OCI-LY7 (cell line): ENCODE measurements at regions of chr17 and their contacts with region 1.

Region 1: DNA sequence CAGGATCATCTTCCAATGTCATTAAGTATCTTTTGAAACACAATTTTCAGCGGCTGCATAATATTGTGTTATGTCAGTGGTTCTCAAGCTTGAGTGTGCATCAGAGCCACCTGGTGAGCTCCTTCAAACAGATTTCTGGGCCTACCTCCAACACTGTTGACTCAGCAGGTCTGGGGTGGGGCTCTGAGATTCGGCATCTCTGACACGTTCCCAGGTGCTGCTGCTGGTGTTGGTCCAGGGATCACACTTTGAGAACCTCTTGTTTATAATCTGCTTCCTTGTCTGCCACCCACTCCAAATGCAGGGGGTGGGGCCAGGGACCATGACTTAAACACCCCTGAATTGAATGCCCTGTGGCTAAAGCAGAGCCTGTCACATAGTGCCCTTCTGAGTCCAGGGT is 73.8 kb upstream of the HNF1B start:
- DNase-seq: no peak
- H3K4me3 ChIP-seq: no peak overlapping the region
- H3K27ac ChIP-seq: no peak overlapping the region
- H3K4me1 ChIP-seq: peaks cover 49% of the 10 kb centered on the region
- CTCF ChIP-seq: no peak

Region 2: GRCh38 chr17:37527249-37527851 is 291.3 kb before region 1 on chr17:
- CTCF ChIA-PET with region 1: no interaction called
- POLR2A ChIA-PET with region 1: no interaction called
- intact Hi-C with region 1: loop called (anchors 10 kb)
- DNase-seq: peak; percentile 72
- H3K4me3 ChIP-seq: no peak overlapping the region
- H3K27ac ChIP-seq: no peak overlapping the region
- H3K4me1 ChIP-seq: no peaks in the 10 kb centered on the region
- CTCF ChIP-seq: peak; percentile 90

Region 3: DNA sequence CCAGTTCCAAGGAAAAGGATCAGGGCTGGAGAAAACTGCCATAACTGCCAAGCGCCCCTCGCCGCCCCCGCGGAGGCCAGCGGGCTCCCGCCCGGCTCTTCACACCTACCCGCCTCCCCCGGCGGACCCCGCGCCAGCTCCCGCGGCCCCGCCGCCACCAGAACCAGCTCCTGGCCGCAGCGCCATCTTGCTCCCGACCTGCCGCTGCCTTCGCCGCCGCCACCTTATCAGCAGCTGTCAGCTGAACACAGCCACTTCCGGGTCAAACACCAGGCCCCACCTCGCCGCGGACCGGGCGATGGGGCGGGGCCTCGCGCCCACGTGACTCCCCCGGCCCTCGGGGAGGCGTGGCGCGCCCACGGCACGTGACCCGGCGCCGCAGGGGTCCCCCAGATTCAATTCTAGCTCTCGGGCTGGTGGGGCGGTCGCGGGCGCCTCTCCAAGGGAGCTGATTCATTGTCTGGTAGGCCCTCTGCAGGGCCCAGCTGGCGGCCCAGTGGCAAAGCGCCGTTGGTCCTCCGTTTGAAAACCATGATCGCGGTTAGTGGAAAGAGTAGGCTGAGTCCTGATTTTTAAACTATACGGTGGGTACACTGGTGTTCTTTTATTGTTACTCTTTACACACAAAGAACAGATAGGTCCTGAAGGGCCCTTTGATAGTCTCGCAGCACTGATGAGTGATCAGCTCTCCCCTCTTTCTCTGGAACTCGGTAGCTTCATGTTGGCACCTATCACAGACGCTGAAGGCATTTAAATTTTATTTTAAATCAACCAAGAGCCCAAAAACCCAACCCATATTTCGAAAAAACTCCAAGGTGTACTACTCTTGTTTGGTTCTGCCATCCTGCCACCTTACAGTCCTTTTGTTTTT is 209.3 kb before region 1 on chr17 and contains the start of gene SYNRG:
- CTCF ChIA-PET with region 1: no interaction called
- POLR2A ChIA-PET with region 1: interaction called, 3 read pairs
- intact Hi-C with region 1: loop called (anchors 5 kb)
- DNase-seq: peak; percentile 97
- H3K4me3 ChIP-seq: peak within 1 kb of the TSS; percentile 99
- H3K27ac ChIP-seq: peak within 1 kb of the TSS; percentile 97
- H3K4me1 ChIP-seq: peaks cover 40% of the 10 kb centered on the region
- CTCF ChIP-seq: peak; percentile 73
- total RNA-seq, gene SYNRG: 39.6 and 46.5 TPM in 2 replicates

Region 4: DNA sequence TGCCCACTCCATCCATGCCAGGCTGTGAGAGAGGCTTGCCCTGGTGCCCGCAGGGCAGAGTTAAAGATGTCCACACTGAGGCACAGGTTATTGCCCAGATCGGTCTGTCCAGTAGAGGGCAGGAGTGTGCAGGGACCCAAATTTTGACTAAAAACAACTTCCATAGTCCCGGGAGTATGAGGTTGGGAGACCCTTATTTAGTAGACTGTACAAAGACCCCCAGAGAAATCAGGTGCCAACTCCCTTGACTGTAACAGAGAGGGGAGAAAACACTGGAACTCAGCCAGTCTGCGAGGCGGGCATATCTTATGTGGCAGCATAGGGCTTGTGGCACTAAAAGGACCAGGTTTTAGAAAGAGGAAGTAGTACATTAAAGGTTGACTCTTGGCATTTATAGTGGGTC is 117.2 kb before region 1 on chr17:
- CTCF ChIA-PET with region 1: no interaction called
- POLR2A ChIA-PET with region 1: no interaction called
- intact Hi-C with region 1: loop called (anchors 10 kb)
- DNase-seq: peak; percentile 40
- H3K4me3 ChIP-seq: no peak overlapping the region
- H3K27ac ChIP-seq: no peak overlapping the region
- H3K4me1 ChIP-seq: no peaks in the 10 kb centered on the region
- CTCF ChIP-seq: peak; percentile 94

Region 5: DNA sequence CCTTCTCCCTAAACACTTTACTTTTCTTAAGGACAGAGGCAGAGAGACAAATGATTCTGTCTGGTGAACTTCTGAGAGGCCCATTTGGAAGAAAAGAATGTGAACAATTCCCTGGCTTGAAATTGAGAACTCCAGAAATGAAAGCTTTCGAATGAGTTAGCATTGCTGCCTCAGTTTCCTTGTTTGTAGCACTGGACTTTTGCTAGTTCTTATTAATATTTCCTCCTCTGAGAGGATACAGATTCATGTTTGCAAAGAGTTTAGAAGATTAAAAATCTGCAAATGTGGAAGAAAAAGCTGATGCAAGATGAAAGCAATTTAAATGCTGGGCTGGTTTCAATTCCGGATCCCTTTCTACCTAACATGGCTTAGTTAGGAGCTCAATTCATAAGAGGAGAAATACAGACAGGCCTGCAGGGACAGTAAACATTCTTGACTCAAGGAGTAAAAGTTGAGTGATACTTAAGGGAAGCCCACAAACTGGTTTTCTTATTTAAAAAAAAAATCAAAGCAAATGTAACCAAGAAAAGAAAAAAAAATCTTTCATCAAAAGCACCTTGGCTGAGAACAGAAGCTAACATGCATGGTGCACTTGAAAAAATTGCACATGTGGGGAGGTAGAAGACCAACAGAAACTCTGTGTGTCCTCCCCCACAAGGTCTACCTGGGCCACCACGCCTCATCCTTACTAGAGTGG is 100.9 kb before region 1 on chr17:
- CTCF ChIA-PET with region 1: no interaction called
- POLR2A ChIA-PET with region 1: no interaction called
- intact Hi-C with region 1: no loop called
- DNase-seq: no peak
- H3K4me3 ChIP-seq: no peak overlapping the region
- H3K27ac ChIP-seq: no peak overlapping the region
- H3K4me1 ChIP-seq: no peaks in the 10 kb centered on the region
- CTCF ChIP-seq: no peak

Region 6: GRCh38 chr17:37830151-37830993 is 11.7 kb after region 1 on chr17:
- CTCF ChIA-PET with region 1: interaction called, 3 read pairs
- POLR2A ChIA-PET with region 1: interaction called, 5 read pairs
- intact Hi-C with region 1: loop called (anchors 1 kb)
- DNase-seq: peak; percentile 80
- H3K4me3 ChIP-seq: peak overlapping the region; percentile 42
- H3K27ac ChIP-seq: peak overlapping the region; percentile 73
- H3K4me1 ChIP-seq: peaks cover 58% of the 10 kb centered on the region
- CTCF ChIP-seq: no peak